CD4-positive, alpha-beta memory T cell (primary cell): ENCODE measurements at regions of chr2 and their contacts with region 1.

Region 1: DNA sequence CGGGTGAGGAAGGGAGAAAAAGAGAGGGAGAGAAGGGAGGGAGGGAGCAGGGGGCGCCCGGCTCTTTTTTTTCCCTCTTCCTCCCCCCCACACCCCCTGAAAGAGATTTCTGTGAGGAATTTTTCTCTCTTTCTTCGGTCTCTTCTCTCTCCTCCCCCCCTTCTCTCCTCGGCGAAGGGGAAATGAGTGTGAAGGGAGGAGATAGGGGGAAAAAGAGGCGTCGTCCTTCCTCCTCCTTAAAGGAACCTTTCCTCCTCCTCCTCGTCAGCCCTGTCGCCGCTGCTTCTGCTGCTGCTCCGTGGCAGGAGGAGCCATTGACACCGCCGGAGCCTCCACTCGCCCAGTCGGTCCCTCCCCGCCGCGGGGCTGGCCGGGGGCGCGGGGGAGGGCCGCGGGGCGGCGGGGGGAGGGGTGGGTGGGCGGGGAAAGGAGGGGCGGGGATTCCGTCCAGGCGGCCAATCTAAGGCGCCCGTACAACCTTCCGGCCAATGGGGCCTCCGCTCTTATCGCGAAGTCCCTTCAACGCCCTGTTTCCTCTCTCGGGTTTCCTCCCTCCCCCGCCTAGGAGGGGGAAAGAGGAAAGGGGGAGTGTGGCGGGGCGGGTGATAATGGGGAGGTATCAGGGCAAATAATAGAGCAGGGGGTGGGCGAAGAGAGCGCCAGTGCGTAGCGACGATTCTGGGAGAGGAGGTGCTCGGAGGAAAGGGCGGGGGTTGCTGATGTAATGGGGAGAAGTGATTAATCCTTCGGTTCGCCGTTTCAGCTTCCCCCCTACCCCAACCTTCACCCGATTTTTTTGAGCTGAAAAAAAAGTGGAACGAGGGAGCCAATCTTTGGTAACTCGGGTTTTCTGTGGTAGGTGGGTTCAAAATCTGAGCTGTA is at the start of gene FBXO11:
- DNase-seq: peak; percentile 97 to 99 (median 98)
- H3K4me3 ChIP-seq: peak within 1 kb of the TSS; percentile 63 to 76
- H3K4me3 Mint-ChIP-seq: peak within 1 kb of the TSS; percentile 78 to 94 (median 90)
- H3K27ac ChIP-seq: peak within 1 kb of the TSS; percentile 91
- H3K27ac Mint-ChIP-seq: peak within 1 kb of the TSS; percentile 87 to 99 (median 97)
- H3K4me1 ChIP-seq: peaks cover 38% of the 10 kb centered on the region
- H3K4me1 Mint-ChIP-seq: peaks cover 29 to 62% (median 41%) of the 10 kb centered on the region in 4 donors
- H3K27me3 ChIP-seq: no peaks in the 10 kb centered on the region
- H3K27me3 Mint-ChIP-seq: peaks cover 0 to 2% of the 10 kb centered on the region in 2 donors
- total RNA-seq, gene FBXO11: 85.6 to 87.3 TPM

Region 2: DNA sequence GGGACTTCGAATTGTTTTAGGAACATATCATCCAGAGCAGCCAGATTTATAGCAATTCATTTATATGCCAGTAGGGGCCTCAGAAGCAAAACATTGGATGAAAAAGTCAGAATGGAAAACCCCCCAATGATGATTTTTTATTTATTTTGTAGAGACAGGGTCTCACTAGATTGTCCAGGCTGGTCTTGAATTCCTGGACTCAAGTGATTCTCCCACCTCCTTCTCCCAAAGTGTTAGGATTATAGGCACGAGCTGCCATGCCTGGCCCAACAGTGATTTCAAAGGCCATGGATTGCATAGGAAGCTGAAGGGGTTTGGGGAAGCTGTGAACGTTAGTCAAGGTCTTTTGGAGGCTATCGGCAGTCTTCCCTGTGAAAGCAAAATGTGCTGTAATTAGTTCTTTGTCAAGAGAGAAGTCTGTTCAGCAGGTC is 968.9 kb before region 1 on chr2:
- CTCF ChIA-PET with region 1: no interaction called
- POLR2A ChIA-PET with region 1: no interaction called
- intact Hi-C with region 1: no loop called
- DNase-seq: no peak
- H3K4me3 ChIP-seq: no peak overlapping the region
- H3K4me3 Mint-ChIP-seq: no peak overlapping the region
- H3K27ac ChIP-seq: no peak overlapping the region
- H3K27ac Mint-ChIP-seq: peak overlapping the region in 6 of 7 donors; percentile 7 to 82 (median 36)
- H3K4me1 ChIP-seq: peaks cover 15% of the 10 kb centered on the region
- H3K4me1 Mint-ChIP-seq: peaks cover 9 to 48% (median 23%) of the 10 kb centered on the region in 4 donors
- H3K27me3 ChIP-seq: no peaks in the 10 kb centered on the region
- H3K27me3 Mint-ChIP-seq: no peaks in the 10 kb centered on the region

Region 3: DNA sequence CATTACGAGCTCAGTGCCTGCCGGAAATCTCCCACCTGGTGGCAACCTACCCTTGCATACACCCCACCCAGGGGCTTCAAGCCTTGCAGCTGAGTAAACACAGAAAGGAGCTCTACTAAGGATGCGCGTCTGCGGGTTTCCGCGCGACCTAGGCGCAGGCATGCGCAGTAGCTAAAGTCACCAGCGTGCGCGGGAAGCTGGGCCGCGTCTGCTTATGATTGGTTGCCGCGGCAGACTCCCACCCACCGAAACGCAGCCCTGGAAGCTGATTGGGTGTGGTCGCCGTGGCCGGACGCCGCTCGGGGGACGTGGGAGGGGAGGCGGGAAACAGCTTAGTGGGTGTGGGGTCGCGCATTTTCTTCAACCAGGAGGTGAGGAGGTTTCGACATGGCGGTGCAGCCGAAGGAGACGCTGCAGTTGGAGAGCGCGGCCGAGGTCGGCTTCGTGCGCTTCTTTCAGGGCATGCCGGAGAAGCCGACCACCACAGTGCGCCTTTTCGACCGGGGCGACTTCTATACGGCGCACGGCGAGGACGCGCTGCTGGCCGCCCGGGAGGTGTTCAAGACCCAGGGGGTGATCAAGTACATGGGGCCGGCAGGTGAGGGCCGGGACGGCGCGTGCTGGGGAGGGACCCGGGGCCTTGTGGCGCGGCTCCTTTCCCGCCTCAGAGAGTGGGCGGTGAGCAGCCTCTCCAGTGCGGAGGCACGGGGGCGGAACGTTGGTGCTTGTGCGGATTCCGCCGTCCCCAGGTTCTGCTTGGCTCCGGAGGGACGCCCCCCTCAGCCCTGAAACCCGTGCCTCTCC is 503.4 kb before region 1 on chr2 and contains the start of gene MSH2:
- CTCF ChIA-PET with region 1: no interaction called
- POLR2A ChIA-PET with region 1: interaction called, 3 read pairs
- intact Hi-C with region 1: loop called (anchors 10 kb)
- DNase-seq: peak; percentile 89 to 91 (median 90)
- H3K4me3 ChIP-seq: peak within 1 kb of the TSS; percentile 71 to 80
- H3K4me3 Mint-ChIP-seq: peak within 1 kb of the TSS; percentile 97 to 99 (median 98)
- H3K27ac ChIP-seq: peak within 1 kb of the TSS; percentile 66
- H3K27ac Mint-ChIP-seq: peak within 1 kb of the TSS; percentile 83 to 96 (median 94)
- H3K4me1 ChIP-seq: peaks cover 27% of the 10 kb centered on the region
- H3K4me1 Mint-ChIP-seq: peaks cover 27 to 47% (median 35%) of the 10 kb centered on the region in 4 donors
- H3K27me3 ChIP-seq: no peaks in the 10 kb centered on the region
- H3K27me3 Mint-ChIP-seq: no peaks in the 10 kb centered on the region
- total RNA-seq, gene MSH2: 26.2 to 26.4 TPM

Region 4: GRCh38 chr2:47782671-47783485 is 123.5 kb before region 1 on chr2 and contains the start of gene MSH6:
- CTCF ChIA-PET with region 1: no interaction called
- POLR2A ChIA-PET with region 1: interaction called, 13 read pairs
- intact Hi-C with region 1: loop called (anchors 1 kb)
- DNase-seq: peak; percentile 87 to 93 (median 92)
- H3K4me3 ChIP-seq: peak within 1 kb of the TSS; percentile 78 to 99
- H3K4me3 Mint-ChIP-seq: peak within 1 kb of the TSS; percentile 90 to 94 (median 92)
- H3K27ac ChIP-seq: peak within 1 kb of the TSS; percentile 94
- H3K27ac Mint-ChIP-seq: peak within 1 kb of the TSS; percentile 84 to 94 (median 92)
- H3K4me1 ChIP-seq: peaks cover 36% of the 10 kb centered on the region
- H3K4me1 Mint-ChIP-seq: peaks cover 13 to 33% (median 23%) of the 10 kb centered on the region in 4 donors
- H3K27me3 ChIP-seq: no peaks in the 10 kb centered on the region
- H3K27me3 Mint-ChIP-seq: no peaks in the 10 kb centered on the region
- total RNA-seq, gene MSH6: 39.4 to 49.9 TPM

Region 5: DNA sequence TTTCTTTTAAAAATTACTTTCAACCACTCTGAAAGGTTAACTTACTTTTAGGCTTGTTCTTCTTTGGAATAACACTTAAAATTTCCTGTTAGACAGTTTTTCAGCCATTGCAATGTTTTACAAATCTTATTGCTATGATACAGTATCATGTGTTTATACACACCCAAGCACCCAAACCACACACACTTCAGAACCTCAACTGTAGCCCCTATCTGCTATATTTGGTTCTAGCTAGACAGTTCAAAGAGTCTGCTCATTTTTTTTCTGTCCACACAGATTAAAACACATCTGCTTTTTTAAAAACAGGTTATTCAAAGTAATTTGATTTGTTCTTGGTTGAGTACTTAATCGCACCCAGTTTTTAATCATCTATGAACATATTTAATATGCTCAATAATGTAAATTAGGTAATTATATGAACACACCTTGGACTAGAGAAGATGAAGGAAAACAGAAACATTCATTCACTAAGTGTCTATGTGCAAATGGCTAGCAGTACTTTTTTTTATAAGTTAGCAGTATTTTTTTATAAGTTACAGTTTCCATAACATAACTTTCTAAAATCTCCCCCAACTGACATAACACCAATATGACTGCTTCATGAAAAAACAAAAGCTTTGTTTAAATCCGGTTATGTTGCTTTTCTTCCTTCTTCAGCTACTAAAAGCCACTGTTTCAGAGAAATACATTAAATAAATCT is 17.7 kb before region 1 on chr2:
- CTCF ChIA-PET with region 1: interaction called, 3 read pairs
- POLR2A ChIA-PET with region 1: interaction called, 16 read pairs
- intact Hi-C with region 1: loop called (anchors 2 kb)
- DNase-seq: peak; percentile 50 to 71 (median 63)
- H3K4me3 ChIP-seq: no peak overlapping the region
- H3K4me3 Mint-ChIP-seq: peak overlapping the region in 7 of 8 donors; percentile 39 to 76 (median 58)
- H3K27ac ChIP-seq: peak overlapping the region; percentile 2
- H3K27ac Mint-ChIP-seq: peak overlapping the region; percentile 47 to 92 (median 80)
- H3K4me1 ChIP-seq: peaks cover 54% of the 10 kb centered on the region
- H3K4me1 Mint-ChIP-seq: peaks cover 48 to 80% (median 58%) of the 10 kb centered on the region in 4 donors
- H3K27me3 ChIP-seq: no peaks in the 10 kb centered on the region
- H3K27me3 Mint-ChIP-seq: no peaks in the 10 kb centered on the region

Region 6: GRCh38 chr2:48016225-48017019 is 110.0 kb after region 1 on chr2:
- CTCF ChIA-PET with region 1: interaction called, 4 read pairs
- POLR2A ChIA-PET with region 1: interaction called, 4 read pairs
- intact Hi-C with region 1: loop called (anchors 5 kb)
- DNase-seq: peak in 4 of 5 donors; percentile 2 to 38 (median 4)
- H3K4me3 ChIP-seq: no peak overlapping the region
- H3K4me3 Mint-ChIP-seq: no peak overlapping the region
- H3K27ac ChIP-seq: no peak overlapping the region
- H3K27ac Mint-ChIP-seq: no peak overlapping the region
- H3K4me1 ChIP-seq: no peaks in the 10 kb centered on the region
- H3K4me1 Mint-ChIP-seq: no peaks in the 10 kb centered on the region
- H3K27me3 ChIP-seq: no peaks in the 10 kb centered on the region
- H3K27me3 Mint-ChIP-seq: peaks cover 9 to 16% of the 10 kb centered on the region in 2 donors

Region 7: GRCh38 chr2:48420512-48421197 is 514.3 kb after region 1 on chr2:
- CTCF ChIA-PET with region 1: no interaction called
- POLR2A ChIA-PET with region 1: no interaction called
- intact Hi-C with region 1: loop called (anchors 1 kb)
- DNase-seq: peak; percentile 86 to 93 (median 88)
- H3K4me3 ChIP-seq: no peak overlapping the region
- H3K4me3 Mint-ChIP-seq: peak overlapping the region in 6 of 8 donors; percentile 53 to 74 (median 62)
- H3K27ac ChIP-seq: no peak overlapping the region
- H3K27ac Mint-ChIP-seq: peak overlapping the region; percentile 63 to 90 (median 86)
- H3K4me1 ChIP-seq: peaks cover 20% of the 10 kb centered on the region
- H3K4me1 Mint-ChIP-seq: peaks cover 19 to 31% (median 20%) of the 10 kb centered on the region in 4 donors
- H3K27me3 ChIP-seq: no peaks in the 10 kb centered on the region
- H3K27me3 Mint-ChIP-seq: peaks cover 2% of the 10 kb centered on the region in 2 donors